ENCODE measurements at regions of chr19 and their contacts with region 1.

Region 1: DNA sequence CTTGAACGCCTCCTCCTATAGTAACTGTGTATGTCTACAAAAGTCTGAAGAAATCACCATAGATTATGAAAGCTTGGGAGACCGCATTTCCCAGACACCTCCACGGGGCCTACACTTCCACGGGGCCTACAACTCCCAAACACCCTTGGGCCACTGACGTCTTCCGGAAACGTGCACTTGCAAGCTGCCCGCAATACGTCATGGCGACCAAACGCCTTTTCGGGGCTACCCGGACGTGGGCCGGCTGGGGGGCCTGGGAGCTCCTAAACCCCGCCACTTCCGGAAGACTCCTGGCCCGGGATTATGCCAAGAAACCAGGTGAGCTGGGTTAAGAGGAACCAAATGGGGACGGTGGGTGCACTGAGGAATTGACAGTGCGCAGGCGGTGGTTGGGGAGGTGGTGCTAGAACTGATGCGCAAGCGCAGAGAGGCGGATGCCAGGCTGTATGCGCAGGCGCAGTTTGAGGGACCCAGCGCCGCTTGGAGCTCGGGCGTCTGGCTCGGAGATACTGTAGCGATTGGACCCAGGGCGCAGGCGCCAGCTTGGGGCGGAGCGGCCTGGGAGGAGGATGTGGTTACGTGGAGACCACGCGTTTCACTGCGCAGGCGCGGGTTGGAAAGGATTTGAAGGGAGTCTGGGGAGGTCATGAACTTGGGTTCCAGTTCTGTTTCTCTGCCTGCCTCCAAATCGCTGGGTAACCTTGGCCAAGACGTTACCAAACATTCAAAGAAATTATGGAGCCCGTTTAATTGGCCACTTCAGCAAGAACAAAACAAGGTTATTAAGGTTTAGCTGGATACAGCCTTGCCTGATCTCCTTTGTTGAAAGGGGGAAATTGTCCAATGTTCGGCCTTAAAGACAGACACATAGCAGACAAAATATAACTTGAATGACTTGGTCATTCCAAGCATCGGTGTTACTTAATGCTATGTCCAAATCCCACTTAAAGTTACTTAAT is at the start of gene MRPL54:
- DNase-seq: peak; percentile 100
- H3K4me3 Mint-ChIP-seq: peak within 1 kb of the TSS; percentile 100
- H3K27ac Mint-ChIP-seq: peak within 1 kb of the TSS; percentile 99
- H3K4me1 Mint-ChIP-seq: peaks cover 27% of the 10 kb centered on the region
- H3K27me3 Mint-ChIP-seq: peaks cover 2% of the 10 kb centered on the region
- total RNA-seq, gene MRPL54: 88.2 and 94.7 TPM in 2 replicates

Region 2: GRCh38 chr19:3434712-3435553 is 327.8 kb before region 1 on chr19:
- intact Hi-C with region 1: loop called (anchors 2 kb)
- DNase-seq: peak; percentile 95
- H3K4me3 Mint-ChIP-seq: peak overlapping the region; percentile 95
- H3K27ac Mint-ChIP-seq: peak overlapping the region; percentile 97
- H3K4me1 Mint-ChIP-seq: peaks cover 6% of the 10 kb centered on the region
- H3K27me3 Mint-ChIP-seq: peaks cover 5% of the 10 kb centered on the region

Region 3: GRCh38 chr19:3626473-3627350 is 136.1 kb before region 1 on chr19 and contains the start of gene CACTIN:
- intact Hi-C with region 1: loop called (anchors 1 kb)
- DNase-seq: peak; percentile 98
- H3K4me3 Mint-ChIP-seq: peak within 1 kb of the TSS; percentile 89
- H3K27ac Mint-ChIP-seq: peak within 1 kb of the TSS; percentile 97
- H3K4me1 Mint-ChIP-seq: peaks cover 13% of the 10 kb centered on the region
- H3K27me3 Mint-ChIP-seq: no peaks in the 10 kb centered on the region
- total RNA-seq, gene CACTIN: 37.2 and 40.8 TPM in 2 replicates

Region 4: DNA sequence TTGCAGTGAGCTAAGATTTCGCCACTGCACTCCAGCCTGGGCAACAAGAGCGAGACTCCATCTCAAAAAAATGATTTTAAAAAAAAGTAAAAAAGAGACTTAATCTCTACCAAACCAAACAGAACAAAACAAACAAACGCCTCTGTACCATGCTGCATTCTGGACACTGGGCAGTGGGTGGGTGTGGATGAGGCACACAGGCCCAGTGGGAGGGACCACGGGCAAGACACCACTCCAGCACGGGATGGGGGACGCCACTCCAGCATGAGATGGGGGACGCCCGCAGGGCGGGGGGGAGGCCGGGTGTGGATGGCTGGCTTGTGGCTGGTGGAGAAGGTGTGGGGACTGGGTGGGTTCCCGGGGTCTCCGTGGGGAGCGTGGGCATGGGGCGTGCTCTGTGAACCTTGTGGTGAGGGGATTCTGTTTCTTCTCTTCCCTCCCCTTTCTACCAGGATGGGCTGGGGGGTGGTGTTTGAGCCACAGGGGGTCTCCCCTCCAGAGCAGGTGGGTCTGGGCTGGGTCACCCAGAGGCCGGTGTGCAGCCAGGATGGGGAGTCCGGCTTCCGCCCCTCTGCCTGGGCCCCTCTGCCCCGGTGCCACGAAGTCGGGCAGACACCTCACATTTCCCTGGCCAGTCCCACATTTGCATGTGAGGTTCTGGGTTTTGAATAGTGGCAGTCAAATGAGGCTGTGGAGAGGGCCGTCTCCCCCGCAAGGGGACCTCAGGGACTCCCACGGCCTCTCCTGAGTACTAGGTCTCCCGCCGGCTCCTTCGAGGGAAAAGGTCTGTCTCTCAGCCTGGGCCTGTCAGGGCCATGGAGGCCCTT is 47.3 kb after region 1 on chr19:
- intact Hi-C with region 1: loop called (anchors 1 kb)
- DNase-seq: no peak
- H3K4me3 Mint-ChIP-seq: no peak overlapping the region
- H3K27ac Mint-ChIP-seq: no peak overlapping the region
- H3K4me1 Mint-ChIP-seq: peaks cover 38% of the 10 kb centered on the region
- H3K27me3 Mint-ChIP-seq: no peaks in the 10 kb centered on the region

Region 5: GRCh38 chr19:3984908-3985642 is 222.3 kb after region 1 on chr19 and contains the start of gene EEF2:
- intact Hi-C with region 1: loop called (anchors 1 kb)
- DNase-seq: peak; percentile 87
- H3K4me3 Mint-ChIP-seq: peak within 1 kb of the TSS; percentile 93
- H3K27ac Mint-ChIP-seq: peak within 1 kb of the TSS; percentile 91
- H3K4me1 Mint-ChIP-seq: peaks cover 43% of the 10 kb centered on the region
- H3K27me3 Mint-ChIP-seq: peaks cover 2% of the 10 kb centered on the region
- total RNA-seq, gene EEF2: 2,359 TPM in 2 replicates

Region 6: DNA sequence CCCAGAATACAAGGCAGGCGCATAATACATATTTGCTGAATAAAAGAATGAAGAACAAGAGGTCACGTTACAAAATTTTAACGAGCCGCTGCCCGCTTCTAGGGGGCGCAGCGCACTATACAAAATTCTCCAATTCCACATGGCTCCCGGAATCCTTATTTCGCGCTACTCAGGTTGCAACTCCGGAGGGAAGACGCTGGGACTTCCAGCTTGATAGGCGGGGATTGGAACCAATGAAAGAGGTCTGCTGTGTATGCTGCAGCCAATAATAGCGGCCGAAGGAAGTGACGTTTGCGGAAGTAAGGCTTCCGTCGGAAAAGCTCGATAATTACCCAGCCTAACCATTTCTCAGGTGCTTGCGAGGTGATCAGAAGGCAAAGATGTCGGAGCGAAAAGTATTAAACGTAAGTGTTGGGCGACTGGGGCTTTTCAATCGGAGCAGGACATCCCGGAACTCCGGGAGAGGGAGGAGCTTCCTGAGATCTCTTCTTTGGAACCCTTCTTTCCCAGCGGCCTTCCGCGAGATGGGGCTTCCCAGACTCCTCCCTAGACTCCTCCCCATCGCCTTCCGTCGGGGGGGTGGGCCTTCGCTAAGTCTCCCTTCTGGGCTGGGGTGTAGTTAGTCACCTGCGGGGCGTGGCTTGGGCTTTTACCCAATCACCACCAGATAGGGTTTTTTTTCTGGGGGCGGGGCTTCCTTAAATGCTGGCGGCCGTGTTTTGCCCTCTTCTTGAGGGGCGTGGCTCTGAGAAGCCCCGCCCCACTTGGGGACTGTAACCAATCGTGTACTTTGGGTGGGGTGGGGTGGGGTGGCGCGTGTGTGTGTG is 484.2 kb after region 1 on chr19 and contains the start of gene YJU2:
- intact Hi-C with region 1: loop called (anchors 1 kb)
- DNase-seq: peak; percentile 99
- H3K4me3 Mint-ChIP-seq: peak within 1 kb of the TSS; percentile 96
- H3K27ac Mint-ChIP-seq: peak within 1 kb of the TSS; percentile 100
- H3K4me1 Mint-ChIP-seq: peaks cover 11% of the 10 kb centered on the region
- H3K27me3 Mint-ChIP-seq: no peaks in the 10 kb centered on the region
- total RNA-seq, gene YJU2: 36.8 and 40.6 TPM in 2 replicates